ENCODE measurements at regions of chr11 and their contacts with region 1.

Region 1: DNA sequence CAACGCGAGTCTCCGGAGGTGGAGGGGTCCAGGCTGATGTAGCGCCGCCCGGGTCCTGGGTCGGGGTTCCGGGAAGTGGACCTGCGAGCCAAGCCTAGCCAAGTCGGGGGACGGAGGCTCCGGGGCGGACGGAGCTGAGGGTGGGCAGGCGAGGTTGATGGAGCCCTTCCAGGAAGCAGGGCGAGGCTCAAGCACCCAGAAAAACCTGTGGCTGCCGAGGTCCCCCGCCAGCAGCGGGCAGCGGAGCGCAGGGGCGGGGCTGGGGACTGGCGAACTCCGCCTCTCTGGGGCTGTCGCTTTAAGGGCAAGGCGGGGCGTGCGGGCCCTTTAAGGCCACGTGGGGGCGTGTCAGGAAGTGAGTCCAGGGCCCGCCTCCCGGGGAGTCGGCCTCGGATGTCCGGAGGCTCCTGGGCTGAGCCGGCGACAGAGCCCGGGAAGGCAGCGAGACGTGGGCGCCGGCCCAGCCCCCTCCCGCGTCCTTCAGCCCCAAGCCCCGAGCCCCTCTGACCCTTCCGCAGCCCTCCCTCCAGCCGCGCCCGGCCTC is at the start of gene SLC35C1:
- DNase-seq: peak; percentile 96 to 97 (median 97)
- ATAC-seq: peak; percentile 97
- H3K4me3 ChIP-seq: peak within 1 kb of the TSS; percentile 84
- H3K27ac ChIP-seq: peak within 1 kb of the TSS; percentile 85
- H3K4me1 ChIP-seq: peaks cover 11 to 38% of the 10 kb centered on the region in 2 experiments; a peak in 4 of 5 replicates
- H3K27me3 ChIP-seq: no peaks in the 10 kb centered on the region
- CTCF ChIP-seq: peak in 2 of 3 experiments; percentile 34 to 42; a peak in 3 of 6 replicates
- EP300 ChIP-seq: no peak
- POLR2A ChIP-seq: peak; percentile 78
- RAD21 ChIP-seq: no peak
- polyA plus RNA-seq, gene SLC35C1: 0.65 to 0.98 TPM

Region 2: DNA sequence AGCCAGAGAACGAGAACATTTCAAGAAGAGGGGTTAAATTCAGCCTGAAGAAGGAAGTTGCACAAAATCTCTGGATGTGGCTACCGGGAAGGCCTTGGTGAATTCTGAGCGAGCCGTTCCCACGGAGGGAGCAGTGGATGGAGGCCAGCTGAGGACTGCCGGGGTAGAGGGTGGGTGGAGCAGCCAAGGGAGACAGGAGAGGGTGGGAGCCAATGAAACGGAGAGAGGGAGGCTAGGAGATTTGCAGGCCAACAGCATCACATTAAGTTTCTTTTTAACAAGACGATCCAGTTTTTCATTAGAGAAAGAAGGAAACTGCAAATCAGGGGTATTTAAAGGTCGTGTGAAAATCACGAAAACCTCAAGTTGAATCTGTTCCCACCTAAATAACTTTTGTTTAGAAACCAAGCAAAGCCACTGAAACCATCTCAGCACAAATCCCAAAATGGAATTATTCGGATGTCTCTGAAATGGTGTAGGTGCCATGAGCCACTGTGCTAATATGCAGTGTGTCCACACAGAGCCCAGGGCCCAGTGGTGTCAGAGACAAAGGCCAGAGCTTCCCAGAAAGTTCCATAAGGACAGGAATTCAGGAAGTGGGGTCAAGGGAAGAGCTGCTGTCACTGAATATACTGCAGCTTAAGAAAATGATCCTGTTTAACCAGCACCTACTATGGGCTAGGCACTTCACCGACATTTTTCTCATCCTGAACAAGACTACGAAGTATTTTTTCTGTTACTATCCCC is 59.6 kb before region 1 on chr11:
- CTCF ChIA-PET with region 1: no interaction called
- POLR2A ChIA-PET with region 1: no interaction called
- in situ Hi-C with region 1: no loop called
- intact Hi-C with region 1: loop called (anchors 10 kb)
- DNase-seq: no peak
- ATAC-seq: no peak
- H3K4me3 ChIP-seq: no peak overlapping the region
- H3K27ac ChIP-seq: no peak overlapping the region
- H3K4me1 ChIP-seq: no peaks in the 10 kb centered on the region
- H3K27me3 ChIP-seq: peaks cover 13 to 42% of the 10 kb centered on the region in 2 experiments; a peak in 4 of 5 replicates
- CTCF ChIP-seq: no peak
- EP300 ChIP-seq: no peak
- POLR2A ChIP-seq: no peak
- RAD21 ChIP-seq: no peak

Region 3: GRCh38 chr11:45846974-45847910 is 42.4 kb after region 1 on chr11 and contains the start of gene CRY2:
- CTCF ChIA-PET with region 1: no interaction called
- POLR2A ChIA-PET with region 1: interaction called, 6 read pairs
- in situ Hi-C with region 1: no loop called
- intact Hi-C with region 1: loop called (anchors 5 kb)
- DNase-seq: peak; percentile 99
- ATAC-seq: peak; percentile 94
- H3K4me3 ChIP-seq: peak within 1 kb of the TSS; percentile 100
- H3K27ac ChIP-seq: peak within 1 kb of the TSS; percentile 88
- H3K4me1 ChIP-seq: peaks cover 14 to 21% of the 10 kb centered on the region in 2 experiments
- H3K27me3 ChIP-seq: no peaks in the 10 kb centered on the region
- CTCF ChIP-seq: 0 out of 6 replicates have a peak, but pooled peaks of 1 of the 3 experiments have one; percentile 4
- EP300 ChIP-seq: no peak; the same call in 1 of the 2 replicates
- POLR2A ChIP-seq: peak; percentile 92
- RAD21 ChIP-seq: no peak
- polyA plus RNA-seq, gene CRY2: 2.3 to 3.3 TPM

Measured in K562 (cell line).